Panc1 (cell line): ENCODE measurements at regions of chr12 and their contacts with region 1.

Region 1: DNA sequence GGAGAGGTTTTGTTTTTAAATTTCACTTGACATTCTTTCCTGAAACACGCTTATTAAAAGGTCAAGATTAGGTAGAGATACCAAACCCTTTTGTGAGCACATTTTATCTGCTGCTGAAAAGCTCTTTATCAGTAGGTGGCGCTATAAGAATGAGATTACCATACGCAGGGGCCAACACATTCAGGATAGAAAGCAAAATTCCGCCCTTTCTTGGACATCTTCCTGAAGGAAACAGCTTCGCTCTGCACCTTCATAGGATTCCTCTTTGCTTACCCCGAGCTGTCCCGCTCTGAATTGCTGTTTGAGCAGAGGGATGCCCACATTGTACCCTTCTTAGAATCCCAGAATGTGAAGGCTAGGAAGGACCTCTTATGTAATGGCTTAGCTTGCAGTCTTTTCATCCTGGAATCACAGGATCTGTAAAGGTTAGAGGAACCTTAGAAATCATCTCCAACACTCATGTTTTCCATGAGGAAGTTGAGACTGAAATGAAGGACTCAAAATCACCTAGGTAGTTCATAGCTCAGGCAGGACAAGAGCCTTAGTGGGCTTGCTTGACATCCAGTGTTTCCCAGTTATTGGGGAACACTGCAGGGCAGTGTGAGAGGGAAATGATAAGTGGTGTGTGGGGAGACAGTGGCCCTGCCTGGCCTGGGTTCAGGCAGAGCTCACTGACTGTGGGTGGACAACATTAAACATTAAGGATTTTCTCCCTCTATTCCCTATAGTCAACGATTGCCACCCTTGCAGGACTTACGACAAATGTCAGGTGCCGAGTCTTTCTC is 38.7 kb upstream of the CRY1 start:
- DNase-seq: peak; percentile 25
- ATAC-seq: peak; percentile 82
- H3K4me3 ChIP-seq: no peak overlapping the region
- H3K27ac ChIP-seq: no peak overlapping the region
- H3K4me1 ChIP-seq: no peaks in the 10 kb centered on the region
- H3K27me3 ChIP-seq: no peaks in the 10 kb centered on the region
- CTCF ChIP-seq: peak; percentile 83

Region 2: DNA sequence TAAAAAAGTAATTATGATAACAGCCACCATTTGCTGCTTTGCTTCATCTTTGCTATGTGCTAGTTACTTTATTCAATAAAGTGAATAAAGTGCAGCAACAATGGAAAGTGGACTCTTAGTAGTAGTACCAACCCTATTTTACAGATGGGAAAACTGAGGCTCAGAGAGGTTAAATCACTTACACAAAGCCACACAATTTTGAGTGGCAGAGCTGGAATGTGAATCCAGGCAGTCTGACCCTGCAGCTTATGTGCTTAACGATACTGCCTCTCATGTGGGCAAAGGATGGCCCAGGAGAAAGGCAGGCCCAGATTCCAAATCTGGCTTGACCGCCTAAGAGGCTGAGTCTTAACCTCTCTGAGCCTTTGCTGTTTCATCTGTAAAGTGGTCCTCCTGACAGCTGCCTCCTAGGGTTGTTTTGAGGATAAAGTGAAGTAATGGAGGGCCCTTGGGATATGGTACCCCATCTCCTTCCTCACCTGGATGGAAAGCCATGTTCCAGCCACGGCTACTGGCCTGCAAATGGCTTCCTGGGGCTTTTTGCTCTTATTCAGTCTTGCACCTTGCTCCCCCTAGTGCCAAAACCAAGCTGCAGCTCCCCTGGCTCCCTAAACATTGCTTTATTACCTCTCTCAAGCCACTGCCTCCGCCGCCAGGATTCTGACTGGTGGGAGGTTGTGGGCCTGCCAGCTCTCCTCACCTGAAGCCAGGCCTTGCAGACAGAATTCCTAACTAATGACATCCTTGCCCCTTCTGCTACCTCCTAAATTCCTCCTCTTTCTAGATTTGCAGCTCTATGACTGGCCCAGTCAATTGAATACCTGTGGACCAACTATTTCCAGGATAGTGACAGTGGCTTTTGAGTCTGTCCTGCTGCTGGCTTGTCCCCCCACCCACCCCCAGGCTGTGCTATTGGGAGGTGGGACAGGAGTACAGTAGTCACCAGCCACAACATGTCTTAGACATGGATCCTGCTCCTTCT is 270.3 kb after region 1 on chr12:
- CTCF ChIA-PET with region 1: interaction called, 13 read pairs
- POLR2A ChIA-PET with region 1: no interaction called
- in situ Hi-C with region 1: no loop called
- intact Hi-C with region 1: loop called (anchors 1 kb)
- DNase-seq: no peak
- ATAC-seq: peak; percentile 88
- H3K4me3 ChIP-seq: no peak overlapping the region
- H3K27ac ChIP-seq: no peak overlapping the region
- H3K4me1 ChIP-seq: no peaks in the 10 kb centered on the region
- H3K27me3 ChIP-seq: no peaks in the 10 kb centered on the region; the same call in 1 of the 2 replicates
- CTCF ChIP-seq: peak; percentile 80